BJ (cell line): ENCODE measurements at regions of chr10 and their contacts with region 1.

Region 1: GRCh38 chr10:128211953-128212727 is 85.9 kb upstream of the MKI67 start:
- DNase-seq: no peak
- H3K4me3 ChIP-seq: no peak overlapping the region
- H3K27me3 ChIP-seq: no peaks in the 10 kb centered on the region
- CTCF ChIP-seq: peak; percentile 82

Region 2: GRCh38 chr10:129971381-129972144 is 1759.4 kb after region 1 on chr10:
- CTCF ChIA-PET with region 1: interaction called, 15 read pairs
- POLR2A ChIA-PET with region 1: no interaction called
- DNase-seq: no peak
- H3K4me3 ChIP-seq: no peak overlapping the region; the same call in 1 of the 2 replicates
- H3K27me3 ChIP-seq: peaks cover 44% of the 10 kb centered on the region
- CTCF ChIP-seq: peak; percentile 20; the same call in 1 of the 2 replicates

Region 3: DNA sequence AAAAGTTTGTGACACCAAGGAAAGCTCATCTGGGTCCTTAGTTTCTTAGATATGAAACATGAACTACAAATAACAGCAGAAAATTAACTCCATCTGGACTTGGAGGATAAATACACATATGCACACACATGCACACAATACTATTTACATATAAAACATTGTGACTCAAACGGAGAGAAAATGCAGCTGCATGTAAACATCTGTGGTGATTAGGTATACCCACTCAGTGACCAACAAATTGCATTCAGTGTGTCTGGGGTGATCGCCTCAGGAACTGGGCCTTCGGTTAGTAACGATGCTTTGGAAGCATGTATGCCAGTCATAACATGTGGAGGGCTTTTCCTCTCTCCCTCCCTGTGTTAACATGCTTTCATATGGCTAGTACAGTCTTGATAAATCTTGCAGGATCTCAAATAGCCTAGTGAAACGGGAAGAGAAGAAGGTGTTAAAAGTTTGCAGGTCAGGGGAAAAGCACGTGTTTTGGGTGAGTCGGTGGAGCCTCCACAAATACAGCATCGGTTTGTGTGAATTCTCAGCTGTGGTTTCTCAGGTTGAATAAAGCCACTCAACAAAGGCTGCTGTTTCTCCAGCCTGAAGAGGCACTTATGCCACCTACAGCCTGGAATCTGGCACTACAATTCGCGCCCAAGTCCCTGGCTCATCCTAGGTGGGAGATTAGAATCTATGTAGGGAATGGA is 1915.4 kb after region 1 on chr10:
- CTCF ChIA-PET with region 1: interaction called, 21 read pairs
- POLR2A ChIA-PET with region 1: no interaction called
- DNase-seq: peak; percentile 20
- H3K4me3 ChIP-seq: no peak overlapping the region
- H3K27me3 ChIP-seq: peaks cover 3% of the 10 kb centered on the region; the same call in 1 of the 2 replicates
- CTCF ChIP-seq: peak; percentile 94